Right ventricle myocardium inferior (tissue), 1 donor: ENCODE measurements at regions of chr3 and their contacts with region 1.

Region 1: GRCh38 chr3:56682462-56683121 is 473 bp downstream of the TASOR start:
- DNase-seq: peak; percentile 88
- ATAC-seq: peak; percentile 84

Region 2: GRCh38 chr3:57141719-57142410 is 459.3 kb after region 1 on chr3:
- intact Hi-C with region 1: no loop called
- DNase-seq: no peak
- ATAC-seq: no peak

Region 3: DNA sequence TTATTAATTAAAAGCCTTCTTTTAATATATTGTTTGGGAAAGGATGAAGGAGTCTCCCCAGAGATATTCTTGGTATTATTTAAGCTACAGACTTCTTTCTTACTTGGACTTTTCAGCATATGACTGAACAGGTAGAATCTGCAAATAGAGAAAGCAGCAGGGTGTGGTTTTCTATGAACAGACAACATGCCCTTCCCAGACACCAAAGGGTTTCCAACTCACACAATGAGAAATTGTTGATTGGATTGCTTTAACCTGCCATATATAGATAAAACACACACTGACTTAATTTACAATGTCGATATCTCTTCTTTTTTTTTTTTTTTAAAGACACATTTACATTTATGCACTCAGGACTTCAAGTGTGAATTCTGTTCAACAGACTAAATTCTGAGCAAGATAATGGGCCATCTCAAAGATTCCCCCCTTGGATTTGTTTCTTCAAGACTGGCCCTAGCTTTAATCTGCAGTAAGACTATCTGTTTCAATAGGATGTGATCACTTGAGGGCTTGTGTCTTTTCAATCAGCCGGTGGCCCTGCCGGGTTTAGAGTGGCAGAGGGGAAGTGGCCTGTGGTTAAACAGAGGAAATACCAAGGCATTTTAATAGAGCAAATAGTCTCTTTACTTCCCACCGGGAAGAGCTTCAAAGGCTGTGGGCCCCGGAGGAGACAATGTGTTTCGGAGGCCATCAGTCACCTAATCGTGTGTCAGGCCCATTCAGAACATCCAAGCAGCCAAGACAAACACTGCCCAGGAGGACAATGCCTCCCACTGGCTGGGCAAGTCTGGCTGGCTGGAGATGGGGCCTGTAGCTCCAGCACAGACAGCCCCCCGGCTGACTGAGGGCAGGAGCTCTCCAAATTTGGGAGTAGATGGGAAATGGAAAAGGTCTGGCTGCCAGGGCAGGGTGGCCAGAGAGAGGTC is 476.5 kb after region 1 on chr3:
- intact Hi-C with region 1: loop called (anchors 10 kb)
- DNase-seq: no peak
- ATAC-seq: no peak